Activated CD4-positive, alpha-beta T cell treated with anti-CD3 and anti-CD28 coated beads, Interleukin-2, amount 10 ng/mL, durations not matched to agents 24 days and 14 days (primary cell): ENCODE measurements at regions of chr11 and their contacts with region 1.

Region 1: DNA sequence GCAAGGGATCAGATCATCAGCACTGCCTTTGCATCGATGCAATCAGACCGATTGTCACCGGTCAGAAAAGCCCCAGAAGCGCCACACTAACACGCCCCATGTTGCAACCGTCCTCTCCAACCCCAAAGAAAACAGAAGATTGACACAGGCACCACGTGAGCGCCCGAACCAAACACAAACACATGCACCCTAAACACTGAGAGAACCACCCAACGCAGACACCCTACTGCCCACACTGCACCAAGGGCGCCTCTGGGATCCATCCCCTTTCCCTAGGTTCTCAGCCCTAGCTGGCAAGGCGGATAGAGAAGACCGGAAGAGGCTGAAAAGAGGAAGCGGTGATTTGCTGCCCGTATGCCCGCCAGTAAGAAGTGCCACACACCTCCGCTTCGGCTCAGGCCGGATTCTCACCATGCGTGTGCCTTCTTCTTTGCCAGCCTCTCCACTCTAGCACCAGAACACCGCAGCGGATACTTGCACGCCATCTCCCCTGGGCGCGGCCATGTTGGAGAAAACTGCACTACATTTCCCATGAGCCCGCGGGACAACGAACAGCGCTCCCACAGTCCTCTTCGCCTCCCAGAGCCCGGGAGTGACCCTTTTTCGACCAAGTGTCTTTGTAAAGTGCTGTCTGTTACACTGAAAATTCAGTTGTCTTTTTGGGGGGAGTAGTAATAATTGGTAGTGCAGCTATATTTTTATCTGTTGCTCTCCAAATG is at the start of gene ALKBH8:
- DNase-seq: peak; percentile 93
- H3K4me3 Mint-ChIP-seq: peak within 1 kb of the TSS; percentile 93
- H3K27ac Mint-ChIP-seq: peak within 1 kb of the TSS; percentile 90
- H3K4me1 Mint-ChIP-seq: peaks cover 40% of the 10 kb centered on the region
- H3K27me3 Mint-ChIP-seq: no peaks in the 10 kb centered on the region
- total RNA-seq, gene ALKBH8: 13.3 and 15.0 TPM in 2 replicates

Region 2: GRCh38 chr11:106076919-106077608 is 1488.3 kb before region 1 on chr11 and contains the start of gene KBTBD3:
- intact Hi-C with region 1: loop called (anchors 10 kb)
- DNase-seq: peak; percentile 100
- H3K4me3 Mint-ChIP-seq: peak within 1 kb of the TSS; percentile 97
- H3K27ac Mint-ChIP-seq: peak within 1 kb of the TSS; percentile 98
- H3K4me1 Mint-ChIP-seq: peaks cover 41% of the 10 kb centered on the region
- H3K27me3 Mint-ChIP-seq: no peaks in the 10 kb centered on the region
- total RNA-seq, gene KBTBD3: 3.8 and 4.0 TPM in 2 replicates

Region 3: DNA sequence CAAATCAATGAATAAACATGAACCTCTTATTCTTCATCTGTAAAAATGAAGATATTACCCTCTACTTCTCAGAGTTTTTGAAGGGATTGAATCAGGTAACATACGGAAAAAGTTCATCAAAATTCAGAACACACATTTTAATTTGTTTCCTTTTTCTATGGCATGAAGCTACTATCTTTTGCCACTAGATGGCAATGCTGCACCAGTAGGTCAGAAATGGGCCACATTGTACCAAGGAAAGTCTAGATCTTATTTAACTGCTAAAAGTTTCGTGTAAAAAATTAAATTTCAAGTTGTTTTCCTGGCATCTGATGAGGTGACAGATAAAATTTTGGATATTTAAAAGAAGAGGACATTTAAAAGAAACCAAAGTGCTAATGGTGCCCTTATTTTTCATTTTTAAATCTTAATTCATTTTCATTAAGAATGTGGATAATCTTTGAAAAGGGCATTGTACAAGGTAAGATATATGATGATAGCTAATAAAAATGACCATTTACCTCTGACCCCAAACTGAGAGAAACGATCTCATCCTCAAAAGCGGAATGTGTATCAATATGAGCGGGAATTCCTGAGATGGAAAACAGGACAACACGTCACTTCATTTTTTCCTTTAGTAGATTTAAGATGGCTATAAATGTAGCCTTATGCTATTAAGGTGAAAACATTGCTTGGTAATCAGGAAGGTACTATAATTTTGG is 16.0 kb before region 1 on chr11:
- intact Hi-C with region 1: loop called (anchors 2 kb)
- DNase-seq: peak; percentile 79
- H3K4me3 Mint-ChIP-seq: no peak overlapping the region
- H3K27ac Mint-ChIP-seq: no peak overlapping the region
- H3K4me1 Mint-ChIP-seq: peaks cover 11% of the 10 kb centered on the region
- H3K27me3 Mint-ChIP-seq: no peaks in the 10 kb centered on the region

Region 4: DNA sequence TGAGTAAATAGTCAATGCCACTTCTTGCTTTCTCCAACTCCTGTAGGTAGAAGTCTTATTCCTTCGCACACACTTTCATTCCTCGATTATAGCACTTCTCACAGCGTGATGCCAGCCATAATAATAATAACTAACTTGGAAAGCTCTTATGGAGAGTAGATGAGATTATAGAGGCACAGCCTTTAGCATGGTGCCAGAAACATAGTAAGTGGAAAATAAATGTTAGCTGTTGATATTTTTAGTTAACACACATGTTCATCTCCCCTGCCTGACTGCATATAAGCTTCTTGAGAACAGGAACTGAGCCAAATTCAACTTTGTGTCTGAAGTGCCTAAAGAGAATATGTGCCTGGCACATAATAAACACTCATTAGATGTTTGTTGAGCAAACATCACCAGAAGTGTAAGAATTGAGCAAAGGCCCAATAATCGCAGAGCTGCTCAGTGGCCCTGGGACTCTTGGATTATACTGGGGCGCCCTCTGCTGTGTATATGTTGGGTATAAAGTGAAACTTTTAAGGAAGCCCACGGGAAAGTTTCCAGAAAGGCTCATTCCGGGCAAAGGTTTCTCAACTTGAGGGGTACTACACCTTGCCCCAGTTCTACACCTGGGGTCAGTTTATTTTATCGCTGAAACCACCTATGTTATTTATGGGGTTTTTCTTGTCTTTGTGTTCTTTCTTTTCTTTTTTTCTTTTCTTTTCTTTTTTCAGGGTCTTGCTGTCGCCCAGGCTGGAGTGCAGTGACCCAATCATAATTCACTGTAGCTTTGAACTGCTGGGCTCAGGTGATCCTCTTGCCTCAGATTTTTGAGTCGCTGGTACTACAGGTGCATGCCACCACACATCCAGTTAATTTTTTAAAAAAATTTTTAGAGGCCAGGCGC is 124.2 kb after region 1 on chr11:
- intact Hi-C with region 1: loop called (anchors 1 kb)
- DNase-seq: peak; percentile 88
- H3K4me3 Mint-ChIP-seq: no peak overlapping the region
- H3K27ac Mint-ChIP-seq: no peak overlapping the region
- H3K4me1 Mint-ChIP-seq: no peaks in the 10 kb centered on the region
- H3K27me3 Mint-ChIP-seq: peaks cover 9% of the 10 kb centered on the region

Region 5: GRCh38 chr11:107840129-107840484 is 274.7 kb after region 1 on chr11:
- intact Hi-C with region 1: loop called (anchors 2 kb)
- DNase-seq: no peak
- H3K4me3 Mint-ChIP-seq: peak overlapping the region; percentile 77
- H3K27ac Mint-ChIP-seq: peak overlapping the region; percentile 91
- H3K4me1 Mint-ChIP-seq: peaks cover 52% of the 10 kb centered on the region
- H3K27me3 Mint-ChIP-seq: no peaks in the 10 kb centered on the region

Region 6: DNA sequence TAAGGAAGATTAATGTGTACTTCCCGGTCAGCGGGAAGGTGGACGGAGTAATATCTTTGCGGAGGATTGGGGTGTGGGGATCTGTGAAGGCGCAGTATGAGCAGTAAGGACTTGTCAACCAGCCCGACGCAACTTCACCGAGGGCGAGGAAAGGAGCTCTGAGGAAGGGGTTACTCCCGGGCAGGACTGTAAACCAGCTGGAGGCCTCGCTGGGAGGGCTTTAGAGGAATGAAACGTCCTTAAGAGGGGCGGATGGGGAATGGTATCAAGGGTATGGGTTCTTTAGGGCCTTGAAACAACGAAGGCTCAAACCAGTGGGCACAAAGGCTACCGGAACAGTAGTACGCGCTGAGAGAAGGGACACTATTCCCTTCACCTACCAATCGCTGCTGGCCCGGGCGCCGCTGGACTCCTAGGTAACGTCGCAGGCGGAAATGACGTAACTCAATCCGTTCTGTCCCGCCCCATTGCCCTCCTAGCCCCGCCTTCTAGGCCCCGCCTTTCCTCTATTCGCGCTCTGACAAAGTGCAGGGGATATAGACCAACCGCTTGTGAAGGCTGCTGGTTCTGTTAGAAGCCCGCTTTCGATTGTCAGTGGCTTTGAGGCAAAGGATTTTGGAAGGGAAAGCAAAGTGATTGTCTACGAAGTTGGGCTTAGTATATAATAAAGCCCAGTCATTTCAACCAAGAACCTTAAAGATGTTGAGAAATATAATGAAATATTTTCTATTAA is 901.9 kb after region 1 on chr11 and contains the start of gene C11orf65:
- intact Hi-C with region 1: loop called (anchors 1 kb)
- DNase-seq: peak; percentile 99
- H3K4me3 Mint-ChIP-seq: peak within 1 kb of the TSS; percentile 100
- H3K27ac Mint-ChIP-seq: peak within 1 kb of the TSS; percentile 100
- H3K4me1 Mint-ChIP-seq: peaks cover 13% of the 10 kb centered on the region
- H3K27me3 Mint-ChIP-seq: no peaks in the 10 kb centered on the region
- total RNA-seq, gene C11orf65: 0.30 and 0.40 TPM in 2 replicates